ENCODE measurements at regions of chr6 and their contacts with region 1.

Region 1: DNA sequence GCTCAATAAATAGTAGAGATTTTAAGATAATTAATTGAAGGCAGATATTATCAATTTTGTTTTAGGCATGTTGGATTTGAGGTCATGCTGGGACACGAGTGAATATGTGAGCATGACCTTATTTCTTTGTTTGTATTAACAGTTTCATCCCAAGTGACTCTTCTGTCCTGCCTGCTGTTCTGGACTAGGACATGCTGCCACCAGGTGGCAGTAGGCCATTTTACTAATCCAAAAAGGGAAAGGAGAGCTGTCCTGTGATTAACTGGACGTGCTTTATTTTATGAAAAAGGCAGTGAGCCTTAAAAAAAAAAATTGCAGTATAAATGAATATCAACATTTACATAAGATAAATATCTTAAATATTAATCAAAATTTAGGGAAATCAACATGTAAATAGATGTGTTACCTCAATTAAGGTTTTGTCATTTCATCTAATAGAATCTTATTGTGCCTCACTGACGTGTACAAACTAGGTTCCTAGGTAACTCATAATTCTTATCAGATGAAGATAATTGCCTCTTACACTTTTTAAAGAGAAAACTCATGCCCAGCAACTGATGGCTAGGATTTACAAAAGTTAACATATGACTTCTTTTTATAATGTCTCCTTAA is 49.8 kb downstream of the FRK start:
- DNase-seq: peak; percentile 67
- H3K4me3 ChIP-seq: no peak overlapping the region
- H3K27ac ChIP-seq: no peak overlapping the region
- H3K4me1 ChIP-seq: peaks cover 8% of the 10 kb centered on the region
- CTCF ChIP-seq: peak; percentile 93

Region 2: GRCh38 chr6:116060572-116061283 is 49.8 kb after region 1 on chr6 and contains the start of gene FRK:
- CTCF ChIA-PET with region 1: interaction called, 4 read pairs
- POLR2A ChIA-PET with region 1: interaction called, 5 read pairs
- intact Hi-C with region 1: loop called (anchors 5 kb)
- DNase-seq: no peak
- H3K4me3 ChIP-seq: no peak within 1 kb of the TSS
- H3K27ac ChIP-seq: no peak within 1 kb of the TSS
- H3K4me1 ChIP-seq: no peaks in the 10 kb centered on the region
- CTCF ChIP-seq: no peak; the same call in 1 of the 2 replicates
- total RNA-seq, gene FRK: 0.10 and 0.13 TPM in 2 replicates

Measured in OCI-LY7 (cell line).